ENCODE measurements at regions of chr1 and their contacts with region 1.

Region 1: GRCh38 chr1:11661103-11661502 is 2.9 kb upstream of the FBXO6 start:
- DNase-seq: no peak
- H3K4me3 ChIP-seq: no peak overlapping the region
- H3K4me3 Mint-ChIP-seq: no peak overlapping the region
- H3K27ac Mint-ChIP-seq: no peak overlapping the region
- H3K4me1 ChIP-seq: 0 out of 2 replicates have a peak, but pooled peaks cover 4% of the 10 kb centered on the region
- H3K4me1 Mint-ChIP-seq: no peaks in the 10 kb centered on the region
- H3K27me3 ChIP-seq: no peaks in the 10 kb centered on the region
- H3K27me3 Mint-ChIP-seq: no peaks in the 10 kb centered on the region
- CTCF ChIP-seq: no peak

Region 2: DNA sequence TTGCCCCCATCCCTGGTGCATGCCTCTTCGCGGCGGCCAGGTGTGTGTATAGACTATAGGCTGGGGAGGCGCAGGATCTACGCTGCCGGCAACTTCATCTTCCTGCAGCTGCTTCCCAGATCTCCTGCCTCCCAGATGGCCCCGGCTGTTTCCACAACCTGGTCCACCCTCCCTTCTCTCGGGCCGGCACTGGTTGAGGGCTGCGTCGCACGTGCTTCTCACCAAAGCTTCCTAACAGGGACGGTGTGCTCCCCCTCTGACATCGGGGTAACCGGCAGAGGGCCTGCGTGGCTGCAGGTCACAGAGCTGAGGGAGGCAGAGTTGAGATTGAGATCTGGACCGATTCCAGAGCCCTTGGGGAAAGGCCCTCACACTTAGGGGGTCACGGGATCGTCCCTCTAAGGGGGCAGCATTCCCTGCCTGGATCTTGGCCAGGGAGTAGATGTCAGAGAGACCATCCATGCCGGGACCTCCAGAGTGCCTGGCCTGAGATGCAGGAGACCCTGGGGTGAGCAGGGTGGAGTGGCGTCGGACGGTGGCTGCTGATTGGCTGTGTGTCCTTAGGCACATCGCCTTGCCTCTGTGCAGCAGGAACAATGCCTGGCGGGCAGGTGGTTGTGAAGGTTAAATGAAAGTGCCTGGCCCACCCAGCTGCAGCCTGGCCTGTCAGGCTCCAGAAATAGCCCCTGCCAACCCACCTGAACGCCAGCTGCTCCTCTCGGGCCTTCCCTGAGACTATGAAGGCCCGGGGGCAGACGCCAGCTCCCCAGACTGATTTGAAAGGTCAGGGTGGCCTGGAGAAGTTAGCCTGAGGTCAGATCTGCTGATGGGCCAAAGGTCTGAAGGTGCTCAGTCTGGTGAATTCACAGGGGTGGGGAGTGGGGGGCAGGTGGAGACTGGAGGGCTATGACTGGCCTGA is 608.0 kb before region 1 on chr1:
- CTCF ChIA-PET with region 1: interaction called, 10 read pairs
- POLR2A ChIA-PET with region 1: no interaction called
- intact Hi-C with region 1: no loop called
- DNase-seq: no peak
- H3K4me3 ChIP-seq: no peak overlapping the region
- H3K4me3 Mint-ChIP-seq: no peak overlapping the region
- H3K27ac Mint-ChIP-seq: no peak overlapping the region
- H3K4me1 ChIP-seq: no peaks in the 10 kb centered on the region
- H3K4me1 Mint-ChIP-seq: no peaks in the 10 kb centered on the region
- H3K27me3 ChIP-seq: no peaks in the 10 kb centered on the region
- H3K27me3 Mint-ChIP-seq: no peaks in the 10 kb centered on the region
- CTCF ChIP-seq: no peak

Region 3: DNA sequence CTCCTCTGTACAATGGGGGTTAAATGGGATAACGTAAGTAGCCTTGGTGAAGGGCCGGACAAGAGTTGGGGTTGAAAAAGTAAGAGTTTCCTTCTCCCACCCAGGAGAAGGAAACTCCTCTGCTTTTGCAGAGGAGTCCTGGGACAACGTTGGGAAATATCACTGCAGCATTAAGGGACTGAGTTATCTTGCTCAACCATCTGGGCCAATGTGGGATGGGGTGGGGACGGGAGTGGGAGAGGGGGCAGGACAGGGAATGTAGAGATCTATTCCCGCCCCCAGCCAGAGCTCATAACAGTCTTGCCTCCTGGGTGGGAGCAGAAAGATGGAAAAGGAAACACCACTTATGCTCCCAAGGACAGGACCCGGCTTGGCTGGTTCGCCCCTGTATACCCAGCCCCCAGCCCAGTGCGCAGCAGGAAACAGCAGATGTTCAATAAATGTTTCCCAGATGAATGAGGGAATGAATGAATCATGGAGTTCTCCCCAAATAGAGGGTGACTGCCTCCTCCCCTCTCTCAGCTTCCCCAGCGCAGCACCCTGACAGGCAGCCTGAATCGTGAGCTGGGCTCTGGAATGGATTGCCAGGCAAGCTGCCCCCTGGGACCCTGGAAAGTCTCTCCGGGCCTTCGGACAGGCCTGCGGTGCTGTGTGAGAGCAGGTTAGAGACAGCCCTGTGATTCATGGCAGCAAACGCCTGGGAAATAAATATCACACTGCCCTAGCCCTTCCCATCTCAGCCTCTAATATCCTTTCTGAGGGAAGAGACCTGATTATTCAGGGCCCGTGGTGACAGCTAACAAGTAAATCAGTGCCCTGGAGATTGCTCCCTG is 31.7 kb before region 1 on chr1:
- CTCF ChIA-PET with region 1: no interaction called
- POLR2A ChIA-PET with region 1: no interaction called
- intact Hi-C with region 1: no loop called
- DNase-seq: no peak
- H3K4me3 ChIP-seq: no peak overlapping the region
- H3K4me3 Mint-ChIP-seq: no peak overlapping the region
- H3K27ac Mint-ChIP-seq: no peak overlapping the region
- H3K4me1 ChIP-seq: no peaks in the 10 kb centered on the region
- H3K4me1 Mint-ChIP-seq: no peaks in the 10 kb centered on the region
- H3K27me3 ChIP-seq: no peaks in the 10 kb centered on the region; the same call in 1 of the 2 replicates
- H3K27me3 Mint-ChIP-seq: peaks cover 10% of the 10 kb centered on the region
- CTCF ChIP-seq: no peak

Region 4: GRCh38 chr1:11711490-11711889 is 50.4 kb after region 1 on chr1:
- CTCF ChIA-PET with region 1: interaction called, 13 read pairs
- POLR2A ChIA-PET with region 1: no interaction called
- intact Hi-C with region 1: no loop called
- DNase-seq: no peak
- H3K4me3 ChIP-seq: no peak overlapping the region
- H3K4me3 Mint-ChIP-seq: no peak overlapping the region
- H3K27ac Mint-ChIP-seq: no peak overlapping the region
- H3K4me1 ChIP-seq: no peaks in the 10 kb centered on the region
- H3K4me1 Mint-ChIP-seq: peaks cover 4% of the 10 kb centered on the region
- H3K27me3 ChIP-seq: no peaks in the 10 kb centered on the region
- H3K27me3 Mint-ChIP-seq: no peaks in the 10 kb centered on the region
- CTCF ChIP-seq: no peak

Region 5: GRCh38 chr1:11719313-11720032 is 58.4 kb after region 1 on chr1:
- CTCF ChIA-PET with region 1: interaction called, 17 read pairs
- POLR2A ChIA-PET with region 1: no interaction called
- intact Hi-C with region 1: no loop called
- DNase-seq: peak; percentile 39 to 62
- H3K4me3 ChIP-seq: peak overlapping the region; percentile 34
- H3K4me3 Mint-ChIP-seq: peak overlapping the region; percentile 72
- H3K27ac Mint-ChIP-seq: no peak overlapping the region
- H3K4me1 ChIP-seq: no peaks in the 10 kb centered on the region
- H3K4me1 Mint-ChIP-seq: no peaks in the 10 kb centered on the region
- H3K27me3 ChIP-seq: no peaks in the 10 kb centered on the region
- H3K27me3 Mint-ChIP-seq: no peaks in the 10 kb centered on the region
- CTCF ChIP-seq: peak; percentile 92 to 94

Measured in Caco-2 (cell line).